CD8-positive, alpha-beta memory T cell (primary cell): ENCODE measurements at regions of chr9 and their contacts with region 1.

Region 1: DNA sequence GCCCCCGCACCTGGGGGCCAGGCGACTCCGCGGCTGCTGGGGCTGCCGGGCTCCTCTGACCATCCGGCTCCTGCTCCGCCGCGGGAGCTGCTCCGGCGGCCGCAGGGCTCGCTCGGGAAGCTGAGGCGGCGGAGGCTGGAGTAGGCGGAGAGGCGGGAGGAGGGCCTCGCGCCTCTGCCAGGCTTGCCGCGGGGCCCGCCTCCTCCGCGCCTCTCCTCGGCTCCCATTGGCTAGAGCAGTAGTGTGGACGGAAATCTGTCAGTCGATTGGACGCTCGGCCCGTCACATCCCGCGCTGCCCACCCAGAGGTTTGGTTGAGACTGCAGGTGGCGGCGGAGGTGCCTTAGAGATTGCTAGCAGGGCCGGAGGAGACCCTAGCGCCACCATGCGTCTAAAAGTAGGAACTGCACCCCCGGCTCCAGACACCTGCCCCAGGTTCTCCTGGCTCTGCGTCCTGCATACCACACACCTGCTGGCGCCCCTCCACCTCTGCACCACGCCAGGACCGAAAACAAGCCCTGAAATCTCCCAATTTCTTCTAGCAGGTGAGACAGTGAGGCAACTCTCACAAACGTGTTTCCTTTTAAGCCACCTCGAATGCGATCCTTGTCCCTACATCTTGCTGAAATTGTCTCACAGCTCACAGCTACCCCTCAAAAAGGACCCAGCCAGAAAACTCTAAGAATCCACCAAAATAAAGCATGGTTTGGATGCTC is at the start of gene SCAI:
- DNase-seq: peak; percentile 98 to 99 (median 99)
- H3K4me3 ChIP-seq: peak within 1 kb of the TSS; percentile 35
- H3K4me3 Mint-ChIP-seq: peak within 1 kb of the TSS; percentile 89 to 99 (median 95)
- H3K27ac ChIP-seq: no peak within 1 kb of the TSS
- H3K27ac Mint-ChIP-seq: peak within 1 kb of the TSS; percentile 28 to 97 (median 92)
- H3K4me1 ChIP-seq: peaks cover 15% of the 10 kb centered on the region
- H3K4me1 Mint-ChIP-seq: peaks cover 26 to 49% (median 35%) of the 10 kb centered on the region in 3 donors
- H3K27me3 ChIP-seq: no peaks in the 10 kb centered on the region
- H3K27me3 Mint-ChIP-seq: no peaks in the 10 kb centered on the region
- total RNA-seq, gene SCAI: 8.3 to 8.5 TPM

Region 2: DNA sequence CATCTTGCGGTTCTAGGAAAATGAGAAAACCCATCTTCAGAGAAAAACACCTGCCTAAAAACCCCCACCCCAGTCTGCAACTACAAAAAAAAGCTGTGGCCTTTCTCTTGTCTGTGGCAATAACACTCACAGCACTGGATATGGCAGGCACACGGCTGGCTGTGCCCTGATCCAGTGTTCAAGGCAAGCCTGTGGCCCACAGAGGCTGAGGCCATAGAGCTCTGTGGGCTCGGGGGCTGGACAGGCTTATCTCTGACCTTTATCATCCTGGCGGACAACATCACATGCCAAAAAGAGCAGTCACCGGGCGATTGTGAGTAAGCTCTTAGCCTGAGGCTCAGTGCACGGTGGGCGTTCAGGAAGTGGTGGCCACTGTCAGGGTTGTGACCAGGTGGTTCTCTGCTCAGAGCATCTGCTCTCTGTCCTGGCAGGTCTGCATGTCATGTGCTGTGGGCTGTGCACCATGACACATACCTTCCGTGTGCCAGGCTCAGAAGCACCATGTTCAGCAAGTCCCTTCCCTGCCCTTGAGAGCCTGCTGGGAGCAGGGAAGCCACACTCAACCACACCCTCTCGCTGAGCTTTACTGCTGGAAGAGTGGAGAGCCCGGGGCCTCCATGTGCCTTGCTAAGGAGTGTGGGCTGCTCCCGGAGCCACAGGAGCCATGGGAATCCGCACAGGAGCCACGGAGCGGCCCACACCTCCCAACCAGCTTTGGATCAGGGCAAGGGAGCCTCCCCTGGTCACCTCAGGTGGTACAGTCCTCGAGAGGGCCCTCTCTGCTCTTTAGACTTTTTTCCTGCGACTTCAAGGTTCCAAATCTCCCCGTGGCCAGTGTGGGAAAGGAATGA is 324.9 kb before region 1 on chr9:
- CTCF ChIA-PET with region 1: no interaction called
- POLR2A ChIA-PET with region 1: no interaction called
- DNase-seq: no peak
- H3K4me3 ChIP-seq: no peak overlapping the region
- H3K4me3 Mint-ChIP-seq: no peak overlapping the region
- H3K27ac ChIP-seq: peak overlapping the region; percentile 31
- H3K27ac Mint-ChIP-seq: no peak overlapping the region
- H3K4me1 ChIP-seq: no peaks in the 10 kb centered on the region
- H3K4me1 Mint-ChIP-seq: no peaks in the 10 kb centered on the region
- H3K27me3 ChIP-seq: no peaks in the 10 kb centered on the region
- H3K27me3 Mint-ChIP-seq: peaks cover 4 to 38% of the 10 kb centered on the region in 2 donors

Region 3: DNA sequence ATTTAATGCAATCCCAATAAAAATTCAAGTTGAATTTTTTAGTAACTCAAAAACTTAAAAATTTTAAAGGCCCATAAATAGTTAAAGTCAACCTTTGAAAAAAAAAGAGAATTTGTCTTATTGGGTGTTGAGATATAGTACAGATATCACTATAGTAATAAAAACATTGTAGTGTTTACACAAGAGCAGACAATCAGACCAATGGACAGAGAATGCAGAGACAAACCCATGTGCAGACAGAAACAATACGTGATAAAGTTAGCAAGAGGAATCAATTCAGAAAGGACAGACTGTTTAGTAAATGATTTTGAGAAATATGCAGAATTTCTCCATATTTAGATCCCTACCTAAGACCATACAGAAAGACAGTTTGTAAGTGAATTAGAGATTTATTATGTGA is 236.6 kb before region 1 on chr9:
- CTCF ChIA-PET with region 1: no interaction called
- POLR2A ChIA-PET with region 1: no interaction called
- DNase-seq: no peak
- H3K4me3 ChIP-seq: no peak overlapping the region
- H3K4me3 Mint-ChIP-seq: no peak overlapping the region
- H3K27ac ChIP-seq: no peak overlapping the region
- H3K27ac Mint-ChIP-seq: peak overlapping the region in 3 of 8 donors; percentile 16 to 62 (median 36)
- H3K4me1 ChIP-seq: no peaks in the 10 kb centered on the region
- H3K4me1 Mint-ChIP-seq: peaks cover 0 to 4% (median 0%) of the 10 kb centered on the region in 3 donors
- H3K27me3 ChIP-seq: no peaks in the 10 kb centered on the region
- H3K27me3 Mint-ChIP-seq: peaks cover 0 to 2% of the 10 kb centered on the region in 2 donors

Region 4: DNA sequence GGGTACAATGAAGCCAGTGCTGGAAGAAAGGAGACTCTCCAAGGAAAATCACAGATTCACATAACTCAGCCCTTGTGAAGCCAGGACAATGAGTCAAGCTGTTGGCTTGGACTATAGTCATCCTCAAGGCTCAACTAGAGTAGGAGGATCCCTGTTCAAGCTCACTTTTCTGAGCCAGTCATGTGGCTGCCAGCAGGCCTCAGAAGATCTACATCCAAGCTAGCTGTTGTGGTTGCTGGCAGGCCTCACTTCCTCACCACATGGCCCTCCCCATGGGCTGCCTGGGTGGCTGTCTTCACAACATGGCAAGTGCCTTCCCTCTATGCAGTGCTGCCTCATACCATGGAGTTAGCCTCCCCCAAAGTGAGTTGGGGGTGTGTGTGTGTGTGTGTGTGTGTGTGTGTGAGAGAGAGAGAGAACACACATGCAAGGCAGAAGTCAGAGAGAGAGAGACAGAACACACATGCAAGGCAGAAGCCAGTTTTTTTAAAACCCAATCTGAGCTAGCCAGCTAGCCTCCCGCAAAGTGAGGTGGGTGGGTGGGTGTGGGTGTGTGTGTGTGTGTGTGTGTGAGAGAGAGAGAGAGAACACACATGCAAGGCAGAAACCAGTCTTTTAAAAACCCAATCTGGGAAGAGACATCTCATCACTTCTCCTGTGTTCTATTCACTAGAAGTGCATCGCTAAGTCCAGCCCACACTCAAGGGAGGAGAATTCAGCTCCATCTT is 17.4 kb before region 1 on chr9:
- CTCF ChIA-PET with region 1: interaction called, 21 read pairs
- POLR2A ChIA-PET with region 1: interaction called, 9 read pairs
- DNase-seq: peak; percentile 64 to 90 (median 81)
- H3K4me3 ChIP-seq: peak overlapping the region; percentile 29
- H3K4me3 Mint-ChIP-seq: peak overlapping the region; percentile 59 to 84 (median 74)
- H3K27ac ChIP-seq: no peak overlapping the region
- H3K27ac Mint-ChIP-seq: peak overlapping the region; percentile 87 to 100 (median 94)
- H3K4me1 ChIP-seq: peaks cover 30% of the 10 kb centered on the region
- H3K4me1 Mint-ChIP-seq: peaks cover 21 to 38% (median 35%) of the 10 kb centered on the region in 3 donors
- H3K27me3 ChIP-seq: no peaks in the 10 kb centered on the region
- H3K27me3 Mint-ChIP-seq: peaks cover 0 to 2% of the 10 kb centered on the region in 2 donors

Region 5: DNA sequence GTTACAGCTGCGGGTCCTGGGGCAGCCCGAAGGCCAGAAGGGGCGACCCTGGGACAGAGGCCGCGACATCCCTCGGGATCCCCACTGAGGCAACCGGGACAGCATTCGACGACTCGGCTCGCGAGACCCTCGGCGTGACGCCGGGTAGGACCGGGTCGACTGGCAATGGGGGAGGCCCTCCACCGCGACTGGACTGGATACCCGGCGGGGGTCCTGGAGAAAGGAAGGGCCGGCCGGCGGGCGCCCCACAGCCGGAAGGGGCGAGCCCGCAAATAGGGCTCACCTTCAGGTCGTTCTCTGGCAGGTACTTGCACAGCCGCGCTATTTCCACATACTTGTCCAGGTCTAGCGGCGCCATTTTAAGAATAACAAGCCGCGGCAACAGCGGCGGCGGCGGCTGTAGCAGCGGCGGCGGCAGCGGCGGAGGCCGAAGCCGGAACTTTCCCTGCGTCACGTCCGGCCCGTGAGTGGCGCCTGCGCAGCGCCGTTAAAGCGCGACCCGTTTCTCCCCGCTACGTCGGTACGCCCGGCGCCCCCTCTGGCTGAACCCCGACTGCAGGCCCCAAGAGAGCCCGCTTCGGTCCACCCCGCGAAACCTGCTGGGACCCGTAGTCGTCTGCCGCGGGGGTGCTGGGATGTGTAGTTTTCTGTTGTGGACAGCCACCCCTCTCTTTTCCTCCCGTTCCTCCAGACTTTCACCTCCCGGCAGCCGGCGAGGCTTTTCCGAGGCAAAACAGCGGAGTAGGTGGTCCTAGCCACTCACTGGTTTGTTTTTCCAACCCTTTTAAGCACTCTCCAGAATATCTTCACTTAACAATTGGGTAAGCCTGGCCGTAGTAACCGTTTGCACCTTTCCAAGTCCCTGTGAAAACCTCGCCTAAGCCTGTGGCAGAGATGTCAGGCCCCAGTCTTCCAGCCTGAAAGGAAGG is 46.1 kb after region 1 on chr9 and contains the start of gene PPP6C:
- CTCF ChIA-PET with region 1: no interaction called
- POLR2A ChIA-PET with region 1: no interaction called
- DNase-seq: peak; percentile 96 to 98 (median 97)
- H3K4me3 ChIP-seq: peak within 1 kb of the TSS; percentile 98
- H3K4me3 Mint-ChIP-seq: peak within 1 kb of the TSS; percentile 94 to 98 (median 97)
- H3K27ac ChIP-seq: peak within 1 kb of the TSS; percentile 97
- H3K27ac Mint-ChIP-seq: peak within 1 kb of the TSS; percentile 89 to 99 (median 96)
- H3K4me1 ChIP-seq: peaks cover 64% of the 10 kb centered on the region
- H3K4me1 Mint-ChIP-seq: peaks cover 41 to 84% (median 71%) of the 10 kb centered on the region in 3 donors
- H3K27me3 ChIP-seq: no peaks in the 10 kb centered on the region
- H3K27me3 Mint-ChIP-seq: no peaks in the 10 kb centered on the region
- total RNA-seq, gene PPP6C: 48.9 to 50.5 TPM